IMR-90 (cell line): ENCODE measurements at regions of chr3 and their contacts with region 1.

Region 1: GRCh38 chr3:143847787-143848631 is at the start of gene SLC9A9:
- DNase-seq: peak; percentile 79
- ATAC-seq: peak; percentile 90
- H3K4me3 ChIP-seq: peak within 1 kb of the TSS; percentile 70
- H3K27ac ChIP-seq: peak within 1 kb of the TSS; percentile 19; the same call in 1 of the 2 replicates
- H3K4me1 ChIP-seq: peaks cover 4% of the 10 kb centered on the region; the same call in 1 of the 2 replicates
- H3K27me3 ChIP-seq: no peaks in the 10 kb centered on the region
- CTCF ChIP-seq: no peak
- POLR2A ChIP-seq: no peak
- RAD21 ChIP-seq: no peak
- total RNA-seq, gene SLC9A9: 2.3 and 4.2 TPM in 2 replicates

Region 2: GRCh38 chr3:143775459-143775858 is 72.5 kb before region 1 on chr3:
- CTCF ChIA-PET with region 1: no interaction called
- POLR2A ChIA-PET with region 1: no interaction called
- dilution Hi-C with region 1: no loop called
- in situ Hi-C with region 1: no loop called
- intact Hi-C with region 1: loop called (anchors 2 kb)
- DNase-seq: peak; percentile 13
- ATAC-seq: peak; percentile 87
- H3K4me3 ChIP-seq: no peak overlapping the region
- H3K27ac ChIP-seq: no peak overlapping the region
- H3K4me1 ChIP-seq: no peaks in the 10 kb centered on the region; the same call in 1 of the 2 replicates
- H3K27me3 ChIP-seq: no peaks in the 10 kb centered on the region
- CTCF ChIP-seq: peak; percentile 56
- POLR2A ChIP-seq: no peak
- RAD21 ChIP-seq: peak; percentile 63

Region 3: GRCh38 chr3:143831208-143831607 is 16.8 kb before region 1 on chr3:
- CTCF ChIA-PET with region 1: no interaction called
- POLR2A ChIA-PET with region 1: no interaction called
- dilution Hi-C with region 1: no loop called
- in situ Hi-C with region 1: no loop called
- intact Hi-C with region 1: loop called (anchors 2 kb)
- DNase-seq: peak; percentile 59
- ATAC-seq: peak; percentile 70
- H3K4me3 ChIP-seq: no peak overlapping the region
- H3K27ac ChIP-seq: no peak overlapping the region
- H3K4me1 ChIP-seq: no peaks in the 10 kb centered on the region
- H3K27me3 ChIP-seq: no peaks in the 10 kb centered on the region
- CTCF ChIP-seq: no peak
- POLR2A ChIP-seq: no peak
- RAD21 ChIP-seq: no peak

Region 4: DNA sequence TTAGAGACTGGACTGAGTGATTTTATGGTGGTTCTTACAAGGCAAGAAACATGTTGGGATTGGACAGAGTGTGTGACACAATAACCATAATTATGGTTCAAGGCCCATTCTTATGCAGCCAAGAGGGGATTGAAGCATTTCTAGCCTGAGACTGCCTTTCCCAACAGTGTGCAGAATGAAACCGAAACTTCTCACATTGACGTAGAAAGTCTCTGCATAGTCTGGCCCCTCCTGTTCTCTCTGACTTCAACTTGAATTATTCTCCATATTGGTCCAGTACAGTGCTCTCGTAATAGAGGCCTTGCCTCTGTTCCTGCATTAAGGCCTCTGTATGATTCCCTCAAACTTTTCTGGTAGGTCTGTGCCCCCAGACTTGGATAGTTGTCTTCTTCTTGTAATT is 261.9 kb after region 1 on chr3:
- CTCF ChIA-PET with region 1: no interaction called
- POLR2A ChIA-PET with region 1: no interaction called
- dilution Hi-C with region 1: no loop called
- in situ Hi-C with region 1: no loop called
- intact Hi-C with region 1: no loop called
- DNase-seq: no peak
- ATAC-seq: no peak
- H3K4me3 ChIP-seq: no peak overlapping the region
- H3K27ac ChIP-seq: no peak overlapping the region
- H3K4me1 ChIP-seq: no peaks in the 10 kb centered on the region
- H3K27me3 ChIP-seq: no peaks in the 10 kb centered on the region
- CTCF ChIP-seq: no peak
- POLR2A ChIP-seq: no peak
- RAD21 ChIP-seq: no peak

Region 5: DNA sequence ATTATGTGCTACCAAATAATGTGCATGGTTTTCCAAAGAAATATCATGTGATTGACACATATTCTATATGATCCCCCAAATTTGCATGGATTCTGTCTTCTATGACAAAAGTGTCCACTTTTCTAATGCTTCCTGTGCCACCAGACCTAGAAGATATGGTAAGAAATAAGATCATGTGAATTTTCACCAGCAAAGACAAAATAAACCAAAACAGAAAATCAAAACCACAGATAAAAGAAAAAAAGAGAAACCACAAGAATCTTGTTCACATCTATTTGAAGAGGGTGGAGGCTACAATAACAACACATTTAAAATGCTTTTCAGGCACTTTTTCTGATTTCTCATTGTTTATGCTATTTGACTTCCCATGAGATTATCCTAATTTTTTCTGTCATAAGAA is 427.0 kb after region 1 on chr3:
- CTCF ChIA-PET with region 1: no interaction called
- POLR2A ChIA-PET with region 1: no interaction called
- dilution Hi-C with region 1: no loop called
- in situ Hi-C with region 1: no loop called
- intact Hi-C with region 1: no loop called
- DNase-seq: no peak
- ATAC-seq: no peak
- H3K4me3 ChIP-seq: no peak overlapping the region
- H3K27ac ChIP-seq: no peak overlapping the region
- H3K4me1 ChIP-seq: no peaks in the 10 kb centered on the region
- H3K27me3 ChIP-seq: no peaks in the 10 kb centered on the region
- CTCF ChIP-seq: no peak
- POLR2A ChIP-seq: no peak
- RAD21 ChIP-seq: no peak